PC-9 (cell line): ENCODE measurements at regions of chr2 and their contacts with region 1.

Region 1: DNA sequence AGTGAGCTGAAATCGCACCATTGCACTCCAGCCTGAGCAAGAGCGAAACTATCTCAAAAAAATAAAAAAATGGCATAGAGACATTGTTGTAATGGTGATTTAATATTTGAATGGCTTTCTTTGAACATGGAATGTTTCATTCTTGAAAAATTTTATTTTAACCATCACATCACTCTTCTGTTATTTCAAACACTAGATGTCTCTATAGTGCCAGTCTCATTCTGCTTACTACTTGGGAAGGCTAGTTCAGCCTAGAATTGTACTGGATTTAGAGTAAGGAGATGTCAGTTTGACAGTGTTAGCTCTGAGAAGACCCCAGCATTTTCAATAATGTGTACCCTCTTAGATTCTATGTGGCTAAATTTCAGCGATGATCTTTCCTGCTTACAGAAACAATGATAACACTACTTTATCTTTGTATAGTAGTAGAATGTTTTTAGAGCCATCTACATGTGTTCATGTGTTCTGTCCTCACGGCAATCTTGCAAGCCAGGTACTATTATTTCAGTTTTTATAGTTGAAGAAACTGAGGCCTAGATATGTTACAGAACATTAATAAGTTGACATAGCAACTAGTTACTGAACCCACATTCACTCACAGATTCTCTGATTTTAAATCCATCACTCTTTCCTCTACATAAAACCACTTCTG is 142.9 kb upstream of the ZSWIM2 start:
- DNase-seq: no peak
- H3K4me3 ChIP-seq: no peak overlapping the region
- H3K27ac ChIP-seq: no peak overlapping the region
- H3K4me1 ChIP-seq: no peaks in the 10 kb centered on the region
- H3K27me3 ChIP-seq: no peaks in the 10 kb centered on the region
- CTCF ChIP-seq: no peak

Region 2: GRCh38 chr2:187037310-187037709 is 45.4 kb after region 1 on chr2:
- CTCF ChIA-PET with region 1: no interaction called
- POLR2A ChIA-PET with region 1: interaction called, 16 read pairs
- intact Hi-C with region 1: no loop called
- DNase-seq: no peak
- H3K4me3 ChIP-seq: no peak overlapping the region
- H3K27ac ChIP-seq: no peak overlapping the region
- H3K4me1 ChIP-seq: no peaks in the 10 kb centered on the region
- H3K27me3 ChIP-seq: no peaks in the 10 kb centered on the region
- CTCF ChIP-seq: no peak